IMR-90 (cell line): ENCODE measurements at regions of chr10 and their contacts with region 1.

Region 1: DNA sequence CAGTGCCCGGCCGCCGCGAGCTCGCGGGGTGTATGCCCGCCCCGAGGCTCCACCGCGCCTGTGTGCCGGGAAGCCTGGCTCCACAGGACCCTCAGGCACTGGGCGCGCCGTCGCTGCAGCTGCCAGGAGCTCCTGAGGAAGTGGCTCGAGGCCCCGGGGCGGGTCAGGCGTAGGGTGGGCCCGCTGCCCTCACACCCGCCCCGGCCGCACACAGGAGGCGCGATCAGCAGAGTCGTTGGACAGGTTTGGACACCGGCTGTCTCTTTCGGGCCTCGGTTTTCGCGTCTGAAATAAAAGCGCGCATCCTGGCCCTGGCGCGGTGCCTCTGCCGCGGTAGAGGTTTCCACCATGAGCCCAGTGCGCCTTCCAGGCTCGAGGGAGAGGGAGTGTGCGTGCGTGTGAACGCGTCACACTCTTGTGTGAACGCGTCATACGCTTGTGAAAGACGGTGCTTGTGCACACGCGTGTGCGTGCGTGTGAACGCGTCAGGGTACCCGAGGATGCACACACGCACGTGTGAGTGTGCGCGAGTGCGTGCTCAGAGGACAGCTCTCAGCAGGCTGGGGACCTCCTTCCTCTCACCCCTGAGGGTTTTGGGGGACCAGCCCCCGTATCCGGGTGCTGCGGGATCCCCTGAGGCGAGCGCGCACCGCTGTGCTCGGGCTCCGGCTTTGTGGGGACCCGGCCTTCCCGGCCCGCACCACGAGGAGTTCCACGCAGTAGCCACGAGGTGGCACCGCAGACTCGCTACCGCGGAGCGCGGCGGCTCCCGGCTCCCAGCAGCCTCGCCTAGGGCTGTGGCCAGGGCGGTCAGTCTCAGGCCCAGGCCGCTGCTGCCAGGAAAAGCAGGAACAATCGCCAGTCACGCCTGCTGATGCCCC is 83.8 kb downstream of the BMS1 start:
- DNase-seq: peak; percentile 64
- ATAC-seq: peak; percentile 100
- H3K4me3 ChIP-seq: peak overlapping the region; percentile 5; the same call in 1 of the 2 replicates
- H3K27ac ChIP-seq: no peak overlapping the region
- H3K4me1 ChIP-seq: no peaks in the 10 kb centered on the region
- H3K27me3 ChIP-seq: peaks cover 26% of the 10 kb centered on the region
- CTCF ChIP-seq: peak; percentile 74
- POLR2A ChIP-seq: no peak
- RAD21 ChIP-seq: peak; percentile 86

Region 2: GRCh38 chr10:42177077-42177792 is 689.1 kb before region 1 on chr10:
- CTCF ChIA-PET with region 1: no interaction called
- POLR2A ChIA-PET with region 1: no interaction called
- dilution Hi-C with region 1: no loop called
- in situ Hi-C with region 1: no loop called
- intact Hi-C with region 1: loop called (anchors 10 kb)
- DNase-seq: no peak
- ATAC-seq: no peak
- H3K4me3 ChIP-seq: no peak overlapping the region
- H3K27ac ChIP-seq: no peak overlapping the region
- H3K4me1 ChIP-seq: no peaks in the 10 kb centered on the region
- H3K27me3 ChIP-seq: peaks cover 4% of the 10 kb centered on the region; the same call in 1 of the 2 replicates
- CTCF ChIP-seq: no peak
- POLR2A ChIP-seq: no peak
- RAD21 ChIP-seq: no peak

Region 3: DNA sequence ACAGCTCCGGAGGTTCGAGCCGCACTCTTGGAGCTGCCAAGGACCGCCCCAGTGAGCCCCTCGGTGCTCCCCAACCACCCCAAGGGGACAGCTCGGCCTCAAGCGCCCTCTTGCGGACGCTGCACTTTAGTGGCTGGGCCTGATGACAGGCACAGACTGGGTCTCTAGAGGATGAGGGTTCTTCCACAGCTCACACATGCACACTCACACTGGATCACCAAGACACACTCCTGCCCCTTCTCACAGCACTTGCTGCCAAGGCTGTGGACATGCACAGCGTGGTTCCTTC is 212.6 kb after region 1 on chr10:
- CTCF ChIA-PET with region 1: no interaction called
- POLR2A ChIA-PET with region 1: no interaction called
- dilution Hi-C with region 1: no loop called
- in situ Hi-C with region 1: no loop called
- intact Hi-C with region 1: loop called (anchors 1 kb)
- DNase-seq: no peak
- ATAC-seq: no peak
- H3K4me3 ChIP-seq: no peak overlapping the region
- H3K27ac ChIP-seq: no peak overlapping the region
- H3K4me1 ChIP-seq: no peaks in the 10 kb centered on the region
- H3K27me3 ChIP-seq: peaks cover 46% of the 10 kb centered on the region
- CTCF ChIP-seq: peak; percentile 38
- POLR2A ChIP-seq: no peak
- RAD21 ChIP-seq: peak; percentile 22; the same call in 1 of the 2 replicates

Region 4: DNA sequence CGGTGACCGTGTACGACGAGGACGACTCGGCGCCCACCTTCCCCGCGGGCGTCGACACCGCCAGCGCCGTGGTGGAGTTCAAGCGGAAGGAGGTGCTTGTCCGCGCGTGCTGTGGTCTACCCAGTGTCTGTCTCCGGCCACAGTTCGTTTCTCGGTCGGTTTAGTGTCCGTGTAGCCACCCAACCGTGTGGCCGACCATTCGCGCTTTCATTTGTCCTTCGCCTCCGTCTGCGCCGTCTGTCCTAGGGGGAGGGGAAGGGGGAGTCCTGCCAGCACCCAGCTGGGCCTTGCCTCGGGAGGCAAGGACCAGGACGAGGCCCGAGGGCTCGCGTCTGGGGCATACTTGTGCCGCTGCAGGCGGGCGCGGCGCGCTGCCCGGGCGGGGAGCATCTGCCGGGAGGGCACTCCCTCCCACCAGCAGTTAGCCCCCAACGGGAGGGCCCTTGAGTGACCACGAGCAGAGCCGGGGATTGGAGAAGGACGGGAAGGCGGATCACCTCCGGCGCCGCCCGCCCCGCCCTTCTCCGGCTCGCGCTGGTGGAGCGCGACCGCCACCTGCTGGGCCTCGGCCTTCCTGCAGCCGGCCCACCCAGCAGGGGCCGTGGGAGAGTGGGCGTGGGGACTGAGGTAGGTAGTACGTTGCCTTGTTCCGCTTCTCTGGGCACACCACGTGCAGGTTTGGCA is 238.9 kb after region 1 on chr10:
- CTCF ChIA-PET with region 1: interaction called, 3 read pairs
- POLR2A ChIA-PET with region 1: no interaction called
- dilution Hi-C with region 1: no loop called
- in situ Hi-C with region 1: loop called (anchors 10 kb)
- intact Hi-C with region 1: loop called (anchors 1 kb)
- DNase-seq: peak; percentile 63
- ATAC-seq: peak; percentile 98
- H3K4me3 ChIP-seq: peak overlapping the region; percentile 46
- H3K27ac ChIP-seq: no peak overlapping the region
- H3K4me1 ChIP-seq: peaks cover 3% of the 10 kb centered on the region; the same call in 1 of the 2 replicates
- H3K27me3 ChIP-seq: peaks cover 27% of the 10 kb centered on the region
- CTCF ChIP-seq: peak; percentile 98
- POLR2A ChIP-seq: peak; percentile 51; the same call in 1 of the 2 replicates
- RAD21 ChIP-seq: peak; percentile 96

Region 5: GRCh38 chr10:43204943-43205671 is 338.8 kb after region 1 on chr10:
- CTCF ChIA-PET with region 1: interaction called, 3 read pairs
- POLR2A ChIA-PET with region 1: no interaction called
- dilution Hi-C with region 1: no loop called
- in situ Hi-C with region 1: no loop called
- intact Hi-C with region 1: loop called (anchors 1 kb)
- DNase-seq: peak; percentile 48
- ATAC-seq: peak; percentile 80
- H3K4me3 ChIP-seq: no peak overlapping the region
- H3K27ac ChIP-seq: no peak overlapping the region
- H3K4me1 ChIP-seq: no peaks in the 10 kb centered on the region; the same call in 1 of the 2 replicates
- H3K27me3 ChIP-seq: peaks cover 3% of the 10 kb centered on the region; the same call in 1 of the 2 replicates
- CTCF ChIP-seq: peak; percentile 63
- POLR2A ChIP-seq: no peak
- RAD21 ChIP-seq: peak; percentile 44